HepG2 (cell line): ENCODE measurements at regions of chr21 and their contacts with region 1.

Region 1: GRCh38 chr21:37374027-37374426 is 7.5 kb downstream of the DYRK1A start:
- DNase-seq: no peak
- ATAC-seq: no peak
- H3K4me3 ChIP-seq: no peak overlapping the region
- H3K27ac ChIP-seq: no peak overlapping the region
- H3K4me1 ChIP-seq: peaks cover 89% of the 10 kb centered on the region
- H3K27me3 ChIP-seq: no peaks in the 10 kb centered on the region
- CTCF ChIP-seq: no peak
- EP300 ChIP-seq: no peak
- POLR2A ChIP-seq: no peak
- RAD21 ChIP-seq: no peak

Region 2: GRCh38 chr21:37413553-37414291 is 39.7 kb after region 1 on chr21:
- CTCF ChIA-PET with region 1: no interaction called
- POLR2A ChIA-PET with region 1: no interaction called
- in situ Hi-C with region 1: no loop called
- intact Hi-C with region 1: no loop called
- DNase-seq: no peak
- ATAC-seq: no peak
- H3K4me3 ChIP-seq: no peak overlapping the region
- H3K27ac ChIP-seq: no peak overlapping the region
- H3K4me1 ChIP-seq: peaks cover 36% of the 10 kb centered on the region
- H3K27me3 ChIP-seq: no peaks in the 10 kb centered on the region
- CTCF ChIP-seq: no peak
- EP300 ChIP-seq: no peak
- POLR2A ChIP-seq: no peak
- RAD21 ChIP-seq: no peak

Region 3: DNA sequence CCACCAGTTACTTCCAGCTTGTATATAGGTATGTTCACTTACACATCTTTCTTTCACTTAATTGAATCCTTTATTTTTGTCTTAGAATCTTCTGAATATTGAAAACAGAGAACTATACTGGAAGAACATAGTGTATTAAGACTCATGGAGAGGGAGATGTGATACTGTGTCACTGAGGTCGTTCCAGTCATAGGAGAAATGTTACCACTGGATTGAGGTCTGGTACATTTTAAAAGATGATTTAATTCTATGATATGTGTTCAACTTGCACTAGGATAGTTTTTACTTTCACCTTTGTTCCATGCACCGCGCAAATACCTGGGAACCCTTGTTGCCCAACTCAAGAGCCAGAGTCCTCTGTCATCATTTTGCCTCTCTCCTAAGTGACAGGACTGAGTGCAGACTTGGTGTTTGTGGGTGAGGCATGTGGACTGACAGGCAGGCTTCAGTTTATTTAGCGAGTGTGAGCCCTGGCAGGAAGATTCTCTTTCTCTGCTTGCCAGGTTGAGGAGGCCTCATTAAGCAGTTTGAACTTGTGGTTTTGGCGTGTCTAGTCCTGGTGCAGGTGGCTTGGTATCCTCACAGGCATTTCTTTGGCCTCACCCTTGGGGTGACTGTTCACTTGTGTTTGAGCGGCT is 56.3 kb after region 1 on chr21:
- CTCF ChIA-PET with region 1: no interaction called
- POLR2A ChIA-PET with region 1: no interaction called
- in situ Hi-C with region 1: no loop called
- intact Hi-C with region 1: loop called (anchors 5 kb)
- DNase-seq: peak; percentile 69
- ATAC-seq: peak; percentile 97
- H3K4me3 ChIP-seq: no peak overlapping the region
- H3K27ac ChIP-seq: peak overlapping the region; percentile 19
- H3K4me1 ChIP-seq: peaks cover 37% of the 10 kb centered on the region
- H3K27me3 ChIP-seq: no peaks in the 10 kb centered on the region
- CTCF ChIP-seq: no peak
- EP300 ChIP-seq: no peak
- POLR2A ChIP-seq: no peak
- RAD21 ChIP-seq: no peak